ENCODE measurements at regions of chr16 and their contacts with region 1.

Region 1: GRCh38 chr16:21190599-21190998 is 20.8 kb downstream of the ZP2 start:
- DNase-seq: no peak
- H3K4me3 Mint-ChIP-seq: no peak overlapping the region
- H3K27ac Mint-ChIP-seq: no peak overlapping the region
- H3K4me1 Mint-ChIP-seq: peaks cover 8% of the 10 kb centered on the region
- H3K27me3 Mint-ChIP-seq: peaks cover 15% of the 10 kb centered on the region
- CTCF ChIP-seq: no peak

Region 2: DNA sequence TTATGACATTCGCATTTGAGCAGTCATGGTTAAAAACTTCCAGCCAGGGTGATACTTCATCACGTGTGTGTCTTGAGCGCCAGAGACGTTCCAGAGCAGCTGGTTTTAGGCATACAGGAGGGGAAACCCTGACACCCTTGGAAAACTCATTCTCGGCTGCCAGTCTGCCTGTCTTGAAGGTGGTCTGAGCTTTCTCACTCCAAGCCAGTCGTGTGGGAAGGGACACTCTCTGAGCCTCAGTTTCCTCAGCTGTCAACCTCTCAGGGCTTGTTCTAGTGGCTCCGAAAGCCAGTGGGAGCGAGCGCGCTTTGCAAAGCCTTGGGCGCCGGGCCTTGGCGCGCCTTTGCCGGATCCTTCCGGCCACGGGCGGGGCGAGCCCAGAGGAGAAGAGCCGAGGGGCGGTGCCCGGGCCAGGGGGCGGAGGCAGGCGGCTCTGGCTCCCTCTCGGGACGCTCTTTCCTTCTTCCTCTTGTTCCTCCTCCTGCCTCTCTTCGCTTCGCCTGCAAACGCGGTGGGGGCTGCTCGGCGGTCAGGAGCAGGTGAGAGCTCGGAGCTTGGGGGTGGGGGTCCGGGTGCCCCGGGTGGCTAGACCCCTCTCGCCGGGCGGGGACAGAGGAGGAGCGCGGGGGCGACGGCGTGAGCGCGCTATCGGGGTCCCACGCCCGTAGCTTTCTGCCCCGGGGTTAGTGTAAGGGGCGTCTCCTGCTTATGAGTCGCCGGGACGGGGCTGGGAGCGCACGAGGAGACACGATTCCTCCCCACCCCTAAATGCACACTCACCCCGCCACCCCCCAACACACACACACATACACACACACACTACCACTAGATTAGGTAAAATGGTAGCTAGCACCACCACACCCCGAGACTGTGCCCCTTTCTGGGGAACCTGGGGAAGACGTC is 32.1 kb before region 1 on chr16 and contains the start of gene LDAF1:
- CTCF ChIA-PET with region 1: interaction called, 27 read pairs
- intact Hi-C with region 1: no loop called
- DNase-seq: peak; percentile 94
- H3K4me3 Mint-ChIP-seq: peak within 1 kb of the TSS; percentile 100
- H3K27ac Mint-ChIP-seq: peak within 1 kb of the TSS; percentile 87
- H3K4me1 Mint-ChIP-seq: peaks cover 42% of the 10 kb centered on the region
- H3K27me3 Mint-ChIP-seq: no peaks in the 10 kb centered on the region
- CTCF ChIP-seq: no peak
- total RNA-seq, gene LDAF1: 46.7 and 50.1 TPM in 2 replicates

Region 3: GRCh38 chr16:21277927-21278706 is 87.5 kb after region 1 on chr16 and contains the start of gene CRYM:
- CTCF ChIA-PET with region 1: interaction called, 24 read pairs
- intact Hi-C with region 1: loop called (anchors 1 kb)
- DNase-seq: peak; percentile 83
- H3K4me3 Mint-ChIP-seq: peak within 1 kb of the TSS; percentile 85
- H3K27ac Mint-ChIP-seq: peak within 1 kb of the TSS; percentile 19
- H3K4me1 Mint-ChIP-seq: peaks cover 7% of the 10 kb centered on the region
- H3K27me3 Mint-ChIP-seq: peaks cover 29% of the 10 kb centered on the region
- CTCF ChIP-seq: peak; percentile 96
- total RNA-seq, gene CRYM: 4.1 and 7.2 TPM in 2 replicates

Region 4: GRCh38 chr16:21283521-21284289 is 93.1 kb after region 1 on chr16:
- CTCF ChIA-PET with region 1: interaction called, 24 read pairs
- intact Hi-C with region 1: loop called (anchors 1 kb)
- DNase-seq: peak; percentile 65
- H3K4me3 Mint-ChIP-seq: peak overlapping the region; percentile 72
- H3K27ac Mint-ChIP-seq: no peak overlapping the region
- H3K4me1 Mint-ChIP-seq: peaks cover 16% of the 10 kb centered on the region
- H3K27me3 Mint-ChIP-seq: peaks cover 47% of the 10 kb centered on the region
- CTCF ChIP-seq: peak; percentile 55

Measured in Calu3 (cell line).